ENCODE measurements at regions of chr17 and their contacts with region 1.

Region 1: DNA sequence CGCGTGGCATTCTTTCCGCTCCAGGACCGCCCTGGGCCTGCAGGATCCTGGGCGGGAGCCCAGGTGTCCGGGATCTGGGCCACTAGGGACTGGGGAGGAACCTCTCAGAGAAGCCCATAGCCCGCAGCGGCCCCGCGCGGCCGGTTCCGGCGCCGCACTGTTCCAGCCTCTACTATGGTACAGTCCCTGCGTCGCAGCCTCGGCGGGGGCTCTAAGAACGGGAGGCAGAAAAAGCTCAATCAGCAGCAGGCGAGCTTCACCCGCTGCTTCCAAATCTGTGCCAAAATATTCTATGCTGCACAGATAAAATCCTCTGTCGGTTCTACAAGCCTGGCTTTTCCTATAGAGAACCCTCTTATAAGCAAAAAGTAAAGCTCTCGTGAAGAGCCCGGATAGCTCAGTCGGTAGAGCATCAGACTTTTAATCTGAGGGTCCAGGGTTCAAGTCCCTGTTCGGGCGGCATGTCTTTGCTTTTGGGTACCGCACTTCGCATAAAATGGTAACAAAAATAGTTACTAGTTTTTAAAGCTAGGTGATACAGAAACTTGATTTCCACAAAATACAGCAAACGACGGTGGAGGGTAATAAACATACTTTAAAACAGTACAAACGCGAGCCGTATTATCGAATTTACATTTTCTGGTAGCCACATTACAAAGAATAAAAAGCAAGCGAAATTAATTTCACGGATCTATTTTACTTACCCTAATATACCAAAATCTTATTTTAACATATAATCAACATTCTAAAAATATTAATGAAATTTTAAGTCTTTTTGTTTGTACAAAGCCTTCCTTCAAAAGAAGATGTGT is 661 bp upstream of the ALOXE3 start:
- DNase-seq: peak; percentile 84
- H3K4me3 Mint-ChIP-seq: peak overlapping the region; percentile 77
- H3K27ac Mint-ChIP-seq: peak overlapping the region; percentile 98
- H3K4me1 Mint-ChIP-seq: peaks cover 32% of the 10 kb centered on the region
- H3K27me3 Mint-ChIP-seq: no peaks in the 10 kb centered on the region
- CTCF ChIP-seq: peak; percentile 87

Region 2: DNA sequence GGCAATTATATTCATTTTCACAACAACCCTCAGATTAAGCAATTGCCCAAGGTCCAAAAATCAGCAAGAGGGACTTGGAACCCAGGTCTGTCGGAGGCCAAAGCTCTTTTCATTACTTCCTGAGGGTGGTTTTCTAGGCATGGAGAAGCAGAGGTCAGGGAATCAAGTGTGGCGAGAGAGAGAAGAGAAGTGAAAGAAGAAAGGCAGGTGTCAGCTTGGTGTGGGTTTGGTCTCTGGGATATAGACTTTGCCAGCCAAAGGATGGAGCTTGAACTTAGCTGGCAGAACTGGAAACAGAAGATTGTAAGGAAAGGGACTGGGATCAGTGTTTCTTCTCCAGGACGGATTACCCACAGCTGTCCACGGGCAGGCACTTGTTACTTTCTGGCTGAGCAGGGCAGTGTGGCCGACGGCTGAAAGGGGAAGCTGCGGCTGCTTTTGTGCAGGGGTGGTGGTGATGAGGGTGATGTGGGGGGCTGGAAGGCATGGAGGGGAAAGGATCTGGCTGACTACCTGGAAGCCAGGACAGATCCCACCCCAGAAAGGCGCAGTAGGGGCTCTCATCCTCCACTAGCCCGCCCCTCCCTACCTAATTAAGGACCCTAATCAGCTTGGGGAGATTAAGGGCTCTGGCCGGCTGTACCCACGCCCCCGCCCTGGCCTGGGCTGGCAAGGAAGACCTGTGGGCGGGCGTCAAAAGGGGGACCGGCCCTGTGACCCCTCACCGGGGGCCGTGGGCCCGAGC is 116.8 kb before region 1 on chr17 and contains the start of gene GUCY2D:
- CTCF ChIA-PET with region 1: no interaction called
- POLR2A ChIA-PET with region 1: no interaction called
- intact Hi-C with region 1: no loop called
- DNase-seq: no peak
- H3K4me3 Mint-ChIP-seq: no peak within 1 kb of the TSS
- H3K27ac Mint-ChIP-seq: no peak within 1 kb of the TSS
- H3K4me1 Mint-ChIP-seq: peaks cover 16% of the 10 kb centered on the region
- H3K27me3 Mint-ChIP-seq: peaks cover 13% of the 10 kb centered on the region
- CTCF ChIP-seq: no peak
- total RNA-seq, gene GUCY2D: not detected in 2 replicates

Region 3: DNA sequence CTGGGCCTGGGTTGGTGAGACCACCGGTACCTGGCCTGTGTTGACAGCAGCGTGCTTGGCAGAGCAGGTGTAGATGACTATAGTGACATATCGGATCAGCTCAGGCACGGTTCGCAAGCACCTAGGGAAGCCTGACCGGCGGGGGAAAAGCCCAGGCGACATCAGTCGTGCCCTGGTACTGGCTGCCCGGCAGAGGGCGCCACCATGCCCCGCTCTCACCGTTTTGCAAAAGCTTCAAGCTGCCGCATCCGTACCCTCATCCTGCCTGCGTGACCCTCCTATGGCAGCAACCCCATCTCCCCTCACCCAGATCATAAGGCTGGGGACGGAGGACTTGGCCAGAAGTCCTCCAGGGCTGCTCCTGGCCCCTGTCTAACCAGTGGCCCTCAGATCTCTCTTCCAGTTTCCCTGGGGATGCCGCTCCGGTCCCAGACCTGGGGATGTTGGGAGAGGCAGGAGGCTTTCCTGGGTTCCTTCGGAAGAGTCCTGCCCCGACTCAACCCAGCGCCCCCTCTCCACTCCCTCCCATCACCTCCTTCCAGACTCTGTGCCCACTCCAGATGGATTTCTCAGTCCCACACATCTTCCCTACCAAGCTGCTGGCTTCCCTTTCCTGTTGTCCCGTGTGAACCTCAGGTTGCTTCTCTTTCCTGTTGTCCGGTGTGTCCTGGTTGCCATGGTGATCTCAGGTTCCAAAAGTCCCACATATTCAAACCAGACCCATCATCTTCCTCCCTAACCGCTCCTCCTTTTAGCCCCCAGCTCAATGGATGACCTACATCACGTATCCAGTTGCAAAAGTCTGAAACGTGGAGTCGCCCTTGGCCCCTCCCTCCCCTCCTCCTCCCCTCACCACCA is 45.1 kb before region 1 on chr17:
- CTCF ChIA-PET with region 1: interaction called, 67 read pairs
- POLR2A ChIA-PET with region 1: interaction called, 21 read pairs
- intact Hi-C with region 1: loop called (anchors 2 kb)
- DNase-seq: peak; percentile 69
- H3K4me3 Mint-ChIP-seq: peak overlapping the region; percentile 52
- H3K27ac Mint-ChIP-seq: no peak overlapping the region
- H3K4me1 Mint-ChIP-seq: peaks cover 19% of the 10 kb centered on the region
- H3K27me3 Mint-ChIP-seq: peaks cover 23% of the 10 kb centered on the region
- CTCF ChIP-seq: peak; percentile 94

Region 4: GRCh38 chr17:8138672-8139371 is 19.8 kb after region 1 on chr17:
- CTCF ChIA-PET with region 1: interaction called, 15 read pairs
- POLR2A ChIA-PET with region 1: interaction called, 37 read pairs
- intact Hi-C with region 1: no loop called
- DNase-seq: peak; percentile 95
- H3K4me3 Mint-ChIP-seq: no peak overlapping the region
- H3K27ac Mint-ChIP-seq: no peak overlapping the region
- H3K4me1 Mint-ChIP-seq: peaks cover 11% of the 10 kb centered on the region
- H3K27me3 Mint-ChIP-seq: no peaks in the 10 kb centered on the region
- CTCF ChIP-seq: peak; percentile 71

Region 5: DNA sequence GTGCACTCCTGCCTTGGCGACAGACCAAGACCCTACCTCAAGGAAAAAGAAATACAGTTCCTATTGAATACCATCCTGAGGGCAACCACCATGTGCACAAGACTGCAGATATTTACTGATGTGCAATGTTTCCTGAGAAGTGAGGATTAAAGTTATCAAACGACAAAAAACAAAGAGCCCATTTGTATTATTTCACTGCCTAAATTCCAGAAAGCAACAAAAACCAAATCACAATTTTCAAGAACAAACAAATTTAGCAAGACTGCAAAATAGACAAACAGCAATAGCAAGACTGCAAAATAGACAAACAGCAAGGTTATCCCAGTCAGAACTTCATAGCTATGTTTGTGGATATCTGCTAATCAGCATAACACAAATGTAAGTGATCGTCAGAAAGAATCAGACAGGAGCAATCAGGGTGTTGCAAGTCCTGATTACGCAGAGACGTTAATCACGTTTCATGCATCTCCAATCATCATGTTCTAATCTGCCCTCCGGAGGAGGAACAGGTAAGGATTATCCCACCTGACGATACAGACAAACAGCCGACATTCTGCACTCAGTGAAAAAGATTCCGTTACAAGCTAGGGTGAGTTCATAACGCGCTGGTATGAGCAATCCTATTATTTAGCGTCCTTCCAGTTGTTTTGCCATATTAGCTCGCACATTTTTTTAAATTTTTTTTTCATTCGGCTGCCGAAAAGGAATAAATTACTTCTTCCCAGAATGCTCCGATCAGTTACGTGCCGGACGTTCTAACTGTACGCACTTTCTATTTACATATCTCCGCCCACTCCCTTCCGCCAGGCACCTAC is 54.3 kb after region 1 on chr17:
- CTCF ChIA-PET with region 1: interaction called, 8 read pairs
- POLR2A ChIA-PET with region 1: interaction called, 25 read pairs
- intact Hi-C with region 1: loop called (anchors 1 kb)
- DNase-seq: peak; percentile 99
- H3K4me3 Mint-ChIP-seq: peak overlapping the region; percentile 91
- H3K27ac Mint-ChIP-seq: peak overlapping the region; percentile 100
- H3K4me1 Mint-ChIP-seq: peaks cover 27% of the 10 kb centered on the region
- H3K27me3 Mint-ChIP-seq: no peaks in the 10 kb centered on the region
- CTCF ChIP-seq: no peak

Region 6: DNA sequence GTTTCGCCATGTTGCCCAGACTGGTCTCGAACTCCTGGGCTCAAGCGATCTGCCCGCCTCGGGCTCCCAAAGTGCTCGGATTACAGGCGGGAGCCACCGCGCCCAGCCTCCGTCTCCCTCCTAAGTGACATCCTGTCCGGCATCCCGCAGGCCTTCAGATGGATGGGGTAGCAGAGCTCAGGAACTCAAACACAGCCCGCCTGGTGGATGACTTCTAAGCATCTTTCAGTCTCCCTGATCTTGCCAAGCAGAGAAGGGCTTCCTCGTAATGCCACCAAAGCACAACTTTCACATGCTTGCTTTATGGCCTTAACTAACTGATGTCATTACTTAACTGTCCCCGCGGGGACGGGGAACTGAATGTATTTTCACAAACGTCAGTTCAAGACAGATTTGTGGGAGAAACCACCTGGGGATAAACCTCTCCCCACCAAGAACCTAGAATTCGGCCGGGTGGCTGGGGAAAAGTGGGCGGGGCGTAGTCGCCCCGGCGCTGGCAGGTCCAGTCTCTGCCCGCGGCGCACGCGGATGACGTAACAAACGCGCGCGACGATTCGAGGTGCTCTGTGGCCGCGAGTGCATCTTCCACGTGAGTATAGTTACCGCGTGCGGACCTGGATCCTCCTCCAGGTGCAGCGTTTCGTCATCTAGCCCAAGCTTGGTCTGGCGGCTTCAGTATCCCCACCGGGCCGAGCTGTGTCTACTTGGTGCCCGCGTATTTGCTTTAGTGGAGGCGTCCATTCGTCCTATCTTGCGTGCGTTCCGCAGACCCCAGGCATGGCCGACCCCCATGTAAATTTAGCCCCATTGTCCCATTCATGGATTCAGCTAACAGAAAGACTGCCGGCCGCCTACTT is 130.0 kb after region 1 on chr17 and contains the start of gene PFAS:
- CTCF ChIA-PET with region 1: no interaction called
- POLR2A ChIA-PET with region 1: interaction called, 48 read pairs
- intact Hi-C with region 1: no loop called
- DNase-seq: peak; percentile 92
- H3K4me3 Mint-ChIP-seq: peak within 1 kb of the TSS; percentile 98
- H3K27ac Mint-ChIP-seq: peak within 1 kb of the TSS; percentile 97
- H3K4me1 Mint-ChIP-seq: peaks cover 15% of the 10 kb centered on the region
- H3K27me3 Mint-ChIP-seq: no peaks in the 10 kb centered on the region
- CTCF ChIP-seq: no peak
- total RNA-seq, gene PFAS: 54.4 and 66.2 TPM in 2 replicates

Region 7: DNA sequence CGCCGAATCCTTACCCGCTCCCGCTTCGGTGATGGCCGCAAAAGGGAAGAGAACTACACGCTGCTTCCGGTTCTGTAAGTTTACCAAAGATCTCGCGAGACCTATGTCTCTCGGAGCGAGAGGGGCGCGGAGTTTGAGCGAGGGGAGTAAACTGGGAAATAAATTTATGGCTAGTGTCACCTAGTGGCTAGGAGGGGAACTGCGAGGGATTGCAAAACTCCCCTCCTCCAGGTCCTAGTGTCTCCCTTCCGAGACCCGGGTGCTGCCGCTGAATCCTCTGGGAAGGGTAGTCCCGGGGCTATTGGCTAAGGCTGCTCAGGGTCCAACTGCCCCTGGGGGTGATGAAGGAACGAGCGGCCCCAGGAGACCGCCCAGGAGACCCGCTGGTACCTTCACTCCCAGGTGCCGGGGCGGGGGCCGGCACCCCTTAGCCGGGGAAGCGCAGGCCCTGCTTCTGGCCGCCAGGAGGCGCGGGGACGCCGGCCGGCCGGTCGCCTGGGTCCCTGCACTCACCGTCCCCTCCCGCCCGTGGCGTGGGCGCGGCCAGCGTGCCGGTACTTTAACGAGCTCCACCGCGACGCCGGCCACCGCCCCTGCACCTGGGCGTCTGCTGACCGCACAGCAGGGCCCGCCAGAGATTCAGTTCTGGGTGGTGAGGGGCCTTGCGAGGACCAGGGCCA is 264.3 kb after region 1 on chr17 and contains the start of gene RPL26:
- CTCF ChIA-PET with region 1: no interaction called
- POLR2A ChIA-PET with region 1: interaction called, 4 read pairs
- intact Hi-C with region 1: loop called (anchors 5 kb)
- DNase-seq: peak; percentile 99
- H3K4me3 Mint-ChIP-seq: peak within 1 kb of the TSS; percentile 97
- H3K27ac Mint-ChIP-seq: peak within 1 kb of the TSS; percentile 100
- H3K4me1 Mint-ChIP-seq: peaks cover 21% of the 10 kb centered on the region
- H3K27me3 Mint-ChIP-seq: no peaks in the 10 kb centered on the region
- CTCF ChIP-seq: peak; percentile 81
- total RNA-seq, gene RPL26: 3,179 and 3,524 TPM in 2 replicates